T-cell (primary cell): ENCODE measurements at regions of chr6 and their contacts with region 1.

Region 1: GRCh38 chr6:160573943-160574342 is 90.1 kb downstream of the LPA start:
- DNase-seq: no peak
- ATAC-seq: no peak
- H3K4me3 ChIP-seq: no peak overlapping the region
- H3K4me3 Mint-ChIP-seq: no peak overlapping the region
- H3K27ac ChIP-seq: no peak overlapping the region
- H3K27ac Mint-ChIP-seq: no peak overlapping the region
- H3K4me1 ChIP-seq: no peaks in the 10 kb centered on the region
- H3K4me1 Mint-ChIP-seq: no peaks in the 10 kb centered on the region
- H3K27me3 ChIP-seq: peaks cover 0 to 16% of the 10 kb centered on the region in 2 experiments
- H3K27me3 Mint-ChIP-seq: peaks cover 15 to 18% of the 10 kb centered on the region in 2 donors

Region 2: GRCh38 chr6:159353193-159353592 is 1220.8 kb before region 1 on chr6:
- CTCF ChIA-PET with region 1: no interaction called
- POLR2A ChIA-PET with region 1: interaction called in 1 of 2 experiments, 10 read pairs
- DNase-seq: no peak
- ATAC-seq: no peak
- H3K4me3 ChIP-seq: no peak overlapping the region
- H3K4me3 Mint-ChIP-seq: no peak overlapping the region
- H3K27ac ChIP-seq: no peak overlapping the region
- H3K27ac Mint-ChIP-seq: no peak overlapping the region
- H3K4me1 ChIP-seq: no peaks in the 10 kb centered on the region
- H3K4me1 Mint-ChIP-seq: no peaks in the 10 kb centered on the region
- H3K27me3 ChIP-seq: no peaks in the 10 kb centered on the region
- H3K27me3 Mint-ChIP-seq: peaks cover 11 to 27% of the 10 kb centered on the region in 2 donors

Region 3: DNA sequence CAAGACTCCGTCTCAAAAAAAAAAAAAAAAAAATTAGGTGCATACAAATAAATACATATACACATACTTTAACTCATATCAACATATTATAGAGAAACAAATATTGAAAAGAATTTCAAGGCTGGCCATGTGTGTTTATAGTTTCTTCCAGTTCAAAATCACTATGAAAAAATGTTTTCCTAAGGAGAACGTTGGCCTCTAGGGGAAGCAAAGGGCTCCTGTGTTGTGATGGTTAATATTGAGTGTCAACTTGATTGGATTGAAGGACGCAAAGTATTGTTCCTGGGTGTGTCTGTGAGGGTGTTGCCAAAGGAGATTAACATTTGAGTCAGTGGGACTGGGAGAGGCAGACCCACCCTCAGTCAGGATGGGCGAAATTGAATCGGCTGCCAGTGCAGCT is 881.9 kb after region 1 on chr6:
- CTCF ChIA-PET with region 1: no interaction called
- POLR2A ChIA-PET with region 1: no interaction called
- DNase-seq: no peak
- ATAC-seq: no peak
- H3K4me3 ChIP-seq: no peak overlapping the region
- H3K4me3 Mint-ChIP-seq: no peak overlapping the region
- H3K27ac ChIP-seq: no peak overlapping the region
- H3K27ac Mint-ChIP-seq: no peak overlapping the region
- H3K4me1 ChIP-seq: no peaks in the 10 kb centered on the region
- H3K4me1 Mint-ChIP-seq: peaks cover 6 to 16% (median 11%) of the 10 kb centered on the region in 3 donors
- H3K27me3 ChIP-seq: no peaks in the 10 kb centered on the region
- H3K27me3 Mint-ChIP-seq: no peaks in the 10 kb centered on the region